HepG2 (cell line): ENCODE measurements at regions of chr12 and their contacts with region 1.

Region 1: GRCh38 chr12:120086801-120087621 is 29.5 kb downstream of the RAB35 start:
- DNase-seq: peak; percentile 96
- ATAC-seq: peak; percentile 93
- H3K4me3 ChIP-seq: peak overlapping the region; percentile 52 to 75 (median 60); a peak in 5 of 6 replicates
- H3K27ac ChIP-seq: peak overlapping the region; percentile 58
- H3K4me1 ChIP-seq: peaks cover 20% of the 10 kb centered on the region
- H3K27me3 ChIP-seq: no peaks in the 10 kb centered on the region
- CTCF ChIP-seq: peak; percentile 100
- EP300 ChIP-seq: peak; percentile 41 to 70; a peak in 2 of 4 replicates
- POLR2A ChIP-seq: peak; percentile 36 to 72; a peak in 2 of 4 replicates
- RAD21 ChIP-seq: peak; percentile 97

Region 2: GRCh38 chr12:119938049-119938667 is 148.9 kb before region 1 on chr12:
- CTCF ChIA-PET with region 1: no interaction called
- POLR2A ChIA-PET with region 1: no interaction called
- in situ Hi-C with region 1: no loop called
- intact Hi-C with region 1: loop called (anchors 2 kb)
- DNase-seq: peak; percentile 39
- ATAC-seq: peak; percentile 67
- H3K4me3 ChIP-seq: no peak overlapping the region
- H3K27ac ChIP-seq: no peak overlapping the region
- H3K4me1 ChIP-seq: peaks cover 23% of the 10 kb centered on the region
- H3K27me3 ChIP-seq: peaks cover 0 to 3% of the 10 kb centered on the region in 2 experiments; a peak in 1 of 5 replicates
- CTCF ChIP-seq: peak; percentile 76
- EP300 ChIP-seq: no peak
- POLR2A ChIP-seq: no peak
- RAD21 ChIP-seq: peak; percentile 39; the same call in 1 of the 2 replicates

Region 3: DNA sequence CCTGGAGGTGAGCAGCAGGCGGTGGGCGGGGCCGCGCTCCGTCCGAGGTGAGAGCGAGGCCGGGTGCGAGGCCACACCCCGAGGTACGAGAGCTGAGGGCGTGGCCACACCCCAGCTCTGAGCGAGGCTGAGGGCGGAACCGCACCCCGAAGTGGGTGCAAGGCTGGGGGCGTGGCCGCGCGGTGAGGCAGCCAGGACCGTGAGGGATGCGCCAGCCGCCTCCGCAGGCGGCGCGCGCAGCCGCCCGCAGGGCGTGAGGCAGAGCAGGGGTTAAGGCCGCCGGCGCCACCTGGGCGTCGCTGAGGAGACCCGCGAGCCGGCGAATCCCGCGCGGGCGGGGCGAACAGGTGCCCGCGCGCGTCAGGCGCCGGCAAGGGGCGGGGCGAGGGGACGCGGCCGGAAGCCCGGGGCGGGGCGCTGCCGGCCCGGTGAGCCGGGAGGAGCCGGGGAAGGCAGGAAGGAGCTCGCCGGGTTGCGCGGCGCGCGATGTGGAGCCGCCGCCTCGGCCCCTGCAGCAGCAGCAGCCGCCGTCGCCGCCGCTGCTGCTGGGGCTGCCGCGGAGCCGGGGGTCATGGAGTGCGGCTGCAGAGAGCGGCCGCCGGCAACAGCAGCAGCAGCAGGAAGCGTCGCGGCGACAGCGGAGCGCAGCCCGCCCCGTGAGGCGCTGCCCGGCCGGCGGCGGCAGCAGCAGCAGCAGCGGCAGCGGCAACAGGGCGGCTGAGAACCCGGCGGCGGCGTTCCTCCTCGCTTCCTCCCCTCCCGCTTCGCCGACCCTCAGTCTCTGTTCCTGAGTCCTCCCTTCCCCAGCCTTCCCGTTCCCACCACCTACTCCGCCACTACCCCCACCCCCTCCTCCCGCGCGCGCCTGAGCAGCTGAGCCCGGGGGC is 98.0 kb before region 1 on chr12 and contains the start of gene BICDL1:
- CTCF ChIA-PET with region 1: no interaction called
- POLR2A ChIA-PET with region 1: no interaction called
- in situ Hi-C with region 1: loop called (anchors 5 kb)
- intact Hi-C with region 1: loop called (anchors 2 kb)
- DNase-seq: peak; percentile 67
- ATAC-seq: peak; percentile 79
- H3K4me3 ChIP-seq: peak within 1 kb of the TSS; percentile 64 to 79 (median 72)
- H3K27ac ChIP-seq: peak within 1 kb of the TSS; percentile 46
- H3K4me1 ChIP-seq: peaks cover 37% of the 10 kb centered on the region
- H3K27me3 ChIP-seq: peaks cover 0 to 20% of the 10 kb centered on the region in 2 experiments; a peak in 4 of 5 replicates
- CTCF ChIP-seq: peak; percentile 4; the same call in 1 of the 2 replicates
- EP300 ChIP-seq: no peak
- POLR2A ChIP-seq: no peak
- RAD21 ChIP-seq: peak; percentile 42; the same call in 1 of the 2 replicates
- total RNA-seq, gene BICDL1: 7.8 and 9.7 TPM in 2 replicates

Region 4: GRCh38 chr12:120116792-120117651 is 30.0 kb after region 1 on chr12:
- CTCF ChIA-PET with region 1: no interaction called
- POLR2A ChIA-PET with region 1: interaction called, 12 read pairs
- in situ Hi-C with region 1: no loop called
- intact Hi-C with region 1: no loop called
- DNase-seq: peak; percentile 86
- ATAC-seq: peak; percentile 76
- H3K4me3 ChIP-seq: peak overlapping the region; percentile 70 to 99 (median 93)
- H3K27ac ChIP-seq: peak overlapping the region; percentile 92
- H3K4me1 ChIP-seq: peaks cover 68% of the 10 kb centered on the region
- H3K27me3 ChIP-seq: no peaks in the 10 kb centered on the region; a peak in 1 of 5 replicates
- CTCF ChIP-seq: no peak
- EP300 ChIP-seq: peak in 1 of 2 experiments; percentile 46; a peak in 1 of 4 replicates
- POLR2A ChIP-seq: peak in 1 of 2 experiments; percentile 93; a peak in 2 of 4 replicates
- RAD21 ChIP-seq: no peak; the same call in 1 of the 2 replicates